BJ (cell line): ENCODE measurements at regions of chr10 and their contacts with region 1.

Region 1: GRCh38 chr10:119199231-119199992 is 8.0 kb upstream of the GRK5 start:
- DNase-seq: no peak
- H3K4me3 ChIP-seq: no peak overlapping the region
- H3K27me3 ChIP-seq: no peaks in the 10 kb centered on the region
- CTCF ChIP-seq: peak; percentile 79

Region 2: GRCh38 chr10:118960157-118961090 is 239.0 kb before region 1 on chr10:
- CTCF ChIA-PET with region 1: no interaction called
- POLR2A ChIA-PET with region 1: no interaction called
- DNase-seq: no peak
- H3K4me3 ChIP-seq: no peak overlapping the region
- H3K27me3 ChIP-seq: peaks cover 1% of the 10 kb centered on the region; the same call in 1 of the 2 replicates
- CTCF ChIP-seq: no peak

Region 3: GRCh38 chr10:119167041-119167440 is 32.4 kb before region 1 on chr10:
- CTCF ChIA-PET with region 1: interaction called, 11 read pairs
- POLR2A ChIA-PET with region 1: interaction called, 3 read pairs
- DNase-seq: no peak
- H3K4me3 ChIP-seq: no peak overlapping the region
- H3K27me3 ChIP-seq: no peaks in the 10 kb centered on the region
- CTCF ChIP-seq: no peak

Region 4: DNA sequence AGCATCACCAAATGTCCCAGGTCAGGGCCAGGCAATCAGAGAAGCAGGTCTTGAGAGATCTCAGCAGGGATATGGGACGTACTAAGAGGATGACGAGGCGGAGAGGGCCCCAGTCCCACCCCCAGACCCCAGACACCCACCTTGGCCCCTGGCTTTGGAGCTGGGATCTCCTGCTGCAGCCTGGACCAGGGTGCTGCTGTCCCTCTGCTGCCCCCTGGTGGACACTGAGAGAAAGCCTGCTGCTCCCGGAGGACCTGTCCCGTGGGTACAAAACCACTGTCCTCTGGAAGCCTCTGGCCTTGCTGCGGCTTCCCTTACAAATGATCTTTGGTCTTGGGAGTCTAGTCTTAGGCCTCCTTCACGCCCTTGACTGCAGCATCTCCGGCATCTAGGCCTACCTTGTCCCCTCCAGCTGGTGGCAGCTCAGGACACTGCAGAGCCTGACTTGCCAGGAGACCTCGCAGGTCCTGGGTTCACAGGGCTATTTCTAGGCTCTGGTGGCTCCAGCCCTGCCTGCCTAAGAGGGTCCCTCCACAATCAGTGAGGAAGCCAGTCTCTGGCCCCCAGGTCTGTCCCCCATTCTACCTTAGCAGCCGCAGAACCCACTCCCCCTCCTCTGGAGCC is 246.0 kb after region 1 on chr10:
- CTCF ChIA-PET with region 1: interaction called, 143 read pairs
- POLR2A ChIA-PET with region 1: no interaction called
- DNase-seq: no peak
- H3K4me3 ChIP-seq: no peak overlapping the region
- H3K27me3 ChIP-seq: no peaks in the 10 kb centered on the region
- CTCF ChIP-seq: peak; percentile 98

Region 5: GRCh38 chr10:119457966-119458766 is 258.8 kb after region 1 on chr10:
- CTCF ChIA-PET with region 1: interaction called, 14 read pairs
- POLR2A ChIA-PET with region 1: no interaction called
- DNase-seq: no peak
- H3K4me3 ChIP-seq: no peak overlapping the region
- H3K27me3 ChIP-seq: no peaks in the 10 kb centered on the region
- CTCF ChIP-seq: no peak

Region 6: DNA sequence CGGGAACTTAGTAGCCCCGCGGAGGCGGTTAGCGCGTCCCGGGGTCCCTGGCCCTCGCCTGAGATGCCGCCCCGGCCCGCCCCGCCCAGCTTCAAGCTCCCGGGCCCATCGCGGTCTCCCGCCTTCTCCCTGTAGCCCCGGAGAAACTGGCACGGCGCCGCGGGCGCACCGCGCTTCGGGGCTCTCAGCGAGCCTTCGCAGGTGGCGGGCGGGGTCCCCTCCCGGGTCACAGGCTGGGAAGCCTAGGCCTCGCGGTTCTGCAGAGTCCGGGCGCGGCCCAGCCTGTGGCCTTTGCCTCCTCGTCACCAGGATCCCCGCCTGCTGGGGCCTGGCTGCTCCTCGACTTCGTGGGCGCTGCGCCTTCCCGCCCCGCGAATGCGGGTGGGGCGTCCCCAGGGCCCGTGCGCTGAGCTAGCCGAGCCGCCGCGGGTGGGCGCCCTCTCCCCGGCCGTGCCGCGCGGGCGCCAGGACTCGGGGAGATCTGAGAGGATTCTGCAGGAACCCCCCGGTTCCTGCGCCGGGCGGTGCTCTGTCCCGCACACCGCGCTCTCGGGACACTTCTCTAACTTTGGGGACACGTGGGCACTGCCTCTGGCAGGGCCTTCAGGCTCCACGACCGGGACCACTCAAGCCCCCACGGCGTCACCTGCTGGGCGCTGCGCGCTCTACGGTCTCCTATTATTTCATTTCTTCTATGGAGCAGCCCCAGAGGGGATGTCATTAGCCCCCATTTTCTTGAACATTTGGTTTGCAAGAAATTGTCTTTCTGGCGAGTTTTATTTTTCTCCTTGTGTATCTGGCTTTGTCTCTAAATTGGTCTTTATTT is 343.8 kb after region 1 on chr10:
- CTCF ChIA-PET with region 1: interaction called, 26 read pairs
- POLR2A ChIA-PET with region 1: no interaction called
- DNase-seq: no peak
- H3K4me3 ChIP-seq: peak overlapping the region; percentile 77
- H3K27me3 ChIP-seq: peaks cover under 1% of the 10 kb centered on the region
- CTCF ChIP-seq: peak; percentile 62